Heart right ventricle (tissue), 16 donors: ENCODE measurements at regions of chr11 and their contacts with region 1.

Region 1: DNA sequence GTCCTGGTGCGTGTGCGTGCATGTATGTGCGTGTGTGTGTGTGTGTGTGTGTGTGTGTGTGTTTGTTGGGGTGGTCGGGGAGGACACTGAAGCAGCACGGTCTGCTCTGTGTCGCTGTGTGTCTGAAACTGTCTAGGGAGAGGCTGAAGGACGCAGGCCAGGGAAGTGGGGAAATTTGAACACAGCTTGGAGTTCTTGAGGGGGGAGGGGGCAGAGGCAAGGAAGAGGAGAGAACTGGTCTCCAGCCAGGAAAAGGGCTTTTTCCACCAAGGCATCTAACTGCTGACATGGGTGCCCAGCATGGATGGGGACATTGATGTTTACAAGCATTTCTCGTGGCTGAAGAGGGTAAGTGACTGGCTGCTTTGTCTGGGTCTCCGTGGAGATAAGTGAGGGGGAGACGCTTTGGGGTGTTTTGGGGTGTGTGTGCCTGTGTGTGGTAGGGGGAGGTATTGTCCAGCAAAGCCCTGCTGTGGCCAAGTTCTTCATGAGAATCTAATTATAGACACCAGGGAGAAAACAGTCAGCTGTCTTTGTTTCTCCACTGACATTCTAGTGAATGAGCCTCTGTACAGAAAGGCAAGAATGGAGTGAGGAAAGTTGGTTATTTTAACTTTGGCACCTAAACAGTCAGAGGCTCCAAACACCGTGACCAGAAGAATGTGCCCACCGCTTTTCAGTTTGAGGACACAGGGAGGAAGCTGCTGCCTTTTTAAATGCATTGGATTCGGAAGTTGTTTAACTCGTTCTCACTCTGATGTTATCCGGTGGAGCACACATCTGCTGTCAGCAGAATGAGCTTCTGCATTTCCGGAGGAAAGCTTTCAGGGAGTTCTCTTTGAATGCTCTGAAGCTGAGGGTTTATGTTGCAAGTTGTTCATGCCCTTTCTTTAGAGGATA is 63.7 kb downstream of the PPFIBP2 start:
- DNase-seq: peak; percentile 36 to 63
- ATAC-seq: peak; percentile 53 to 71 (median 64)
- H3K4me3 ChIP-seq: peak overlapping the region; percentile 9 to 56 (median 47)
- H3K27ac ChIP-seq: peak overlapping the region; percentile 65 to 88 (median 82)
- H3K4me1 ChIP-seq: peaks cover 7 to 76% (median 59%) of the 10 kb centered on the region in 9 donors
- H3K27me3 ChIP-seq: peaks cover 0 to 22% (median 0%) of the 10 kb centered on the region in 7 donors
- CTCF ChIP-seq: peak in 1 of 9 donors; percentile 11

Region 2: DNA sequence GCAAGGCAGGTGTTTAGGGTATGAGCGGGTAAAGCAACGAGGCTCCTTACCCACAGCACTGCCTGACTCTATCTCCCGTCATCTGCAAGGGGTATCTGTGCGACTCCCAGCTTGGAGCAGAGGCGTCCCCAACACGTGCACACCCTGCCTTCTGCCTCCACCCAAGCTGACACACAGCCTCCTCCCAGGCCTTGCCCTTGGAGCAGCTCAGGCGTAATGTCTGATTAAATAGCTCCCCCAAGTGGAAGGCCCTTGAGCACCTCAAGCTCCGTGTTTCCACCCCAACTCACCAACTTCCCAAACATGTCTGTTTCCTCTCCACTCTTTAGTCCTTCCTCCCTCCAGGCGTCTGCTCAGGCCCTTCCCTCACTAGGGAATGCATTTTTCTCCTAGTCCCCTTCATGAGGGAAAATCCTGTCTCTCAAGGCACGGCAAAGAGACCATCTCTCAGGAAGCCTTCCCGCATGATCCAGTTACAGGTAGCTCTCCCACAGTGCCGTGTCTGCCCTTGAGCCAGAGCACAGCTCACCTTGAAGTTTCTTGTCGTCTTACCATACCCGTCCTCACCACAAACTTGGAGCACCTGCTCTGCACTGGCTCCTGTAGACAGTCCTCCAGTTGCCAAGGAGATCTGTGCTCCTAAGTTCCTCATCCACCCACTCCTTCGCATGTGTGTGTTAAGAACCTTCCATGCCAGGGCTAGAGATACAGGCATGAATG is 79.9 kb after region 1 on chr11:
- intact Hi-C with region 1: loop called in 4 of 10 experiments (anchors 2 to 5 kb)
- DNase-seq: peak; percentile 48 to 53
- ATAC-seq: peak; percentile 87 to 95 (median 92)
- H3K4me3 ChIP-seq: no peak overlapping the region
- H3K27ac ChIP-seq: peak overlapping the region in 2 of 10 donors; percentile 71
- H3K4me1 ChIP-seq: peaks cover 0 to 19% (median 12%) of the 10 kb centered on the region in 9 donors
- H3K27me3 ChIP-seq: no peaks in the 10 kb centered on the region
- CTCF ChIP-seq: peak in 8 of 9 donors; percentile 27 to 70 (median 57)

Region 3: DNA sequence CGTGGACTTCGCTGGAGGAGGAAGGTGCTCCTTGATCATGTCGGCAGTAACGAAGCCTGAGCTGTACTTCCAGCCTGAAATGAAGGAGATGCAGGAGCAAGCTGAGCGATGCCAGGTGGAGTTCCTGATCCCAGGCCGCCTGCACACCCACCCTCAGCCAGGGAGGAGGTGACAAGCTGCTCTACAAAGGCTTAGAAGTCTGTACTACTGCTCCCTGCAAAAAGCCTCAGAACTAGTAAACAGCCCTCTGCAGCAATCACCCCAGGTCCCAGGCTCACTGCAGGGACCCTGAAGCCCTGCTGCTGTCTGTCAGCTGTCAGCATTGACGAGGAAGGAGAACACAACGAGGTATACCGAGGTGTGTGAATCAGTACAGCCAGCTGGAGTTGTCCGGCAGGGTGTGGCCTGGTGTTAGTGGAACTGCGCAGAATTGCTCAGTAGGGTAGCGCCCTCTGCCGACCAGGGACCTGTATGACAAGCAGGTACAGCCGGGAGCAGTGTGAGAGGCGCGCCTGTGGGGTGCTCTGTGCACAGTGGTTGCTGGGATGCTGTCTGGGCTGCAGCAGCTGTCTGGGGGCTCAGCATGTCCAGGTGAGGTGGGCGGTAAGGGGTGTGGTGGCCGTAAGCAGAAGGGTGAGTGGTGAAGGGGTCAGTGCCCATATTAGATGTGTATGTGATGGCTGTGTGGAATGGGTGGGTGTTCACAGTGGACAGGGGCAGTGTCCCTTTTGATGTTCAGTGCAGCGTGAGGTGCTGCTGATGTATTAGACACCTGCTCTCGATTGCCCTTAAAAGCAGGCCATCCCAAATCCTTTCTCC is 88.1 kb after region 1 on chr11:
- intact Hi-C with region 1: loop called in 5 of 10 experiments (anchors 2 to 5 kb)
- DNase-seq: peak; percentile 71 to 81
- ATAC-seq: peak; percentile 85 to 95 (median 92)
- H3K4me3 ChIP-seq: no peak overlapping the region
- H3K27ac ChIP-seq: no peak overlapping the region
- H3K4me1 ChIP-seq: peaks cover 0 to 3% (median 0%) of the 10 kb centered on the region in 9 donors
- H3K27me3 ChIP-seq: peaks cover 0 to 3% (median 0%) of the 10 kb centered on the region in 7 donors
- CTCF ChIP-seq: peak; percentile 64 to 91 (median 81)